Esophagus muscularis mucosa (tissue), 4 donors: ENCODE measurements at regions of chr5 and their contacts with region 1.

Region 1: GRCh38 chr5:177599731-177600507 is at the start of gene B4GALT7:
- DNase-seq: no peak
- H3K4me3 ChIP-seq: peak within 1 kb of the TSS; percentile 89 to 97 (median 90)
- H3K27ac ChIP-seq: peak within 1 kb of the TSS; percentile 81 to 92 (median 89)
- H3K4me1 ChIP-seq: peaks cover 13 to 31% (median 24%) of the 10 kb centered on the region in 4 donors
- H3K27me3 ChIP-seq: no peaks in the 10 kb centered on the region
- CTCF ChIP-seq: peak in 2 of 3 experiments; percentile 5 to 23
- EP300 ChIP-seq: no peak
- POLR2A ChIP-seq: peak; percentile 35
- total RNA-seq, gene B4GALT7: 14.3 to 17.9 (median 16.9) TPM

Region 2: DNA sequence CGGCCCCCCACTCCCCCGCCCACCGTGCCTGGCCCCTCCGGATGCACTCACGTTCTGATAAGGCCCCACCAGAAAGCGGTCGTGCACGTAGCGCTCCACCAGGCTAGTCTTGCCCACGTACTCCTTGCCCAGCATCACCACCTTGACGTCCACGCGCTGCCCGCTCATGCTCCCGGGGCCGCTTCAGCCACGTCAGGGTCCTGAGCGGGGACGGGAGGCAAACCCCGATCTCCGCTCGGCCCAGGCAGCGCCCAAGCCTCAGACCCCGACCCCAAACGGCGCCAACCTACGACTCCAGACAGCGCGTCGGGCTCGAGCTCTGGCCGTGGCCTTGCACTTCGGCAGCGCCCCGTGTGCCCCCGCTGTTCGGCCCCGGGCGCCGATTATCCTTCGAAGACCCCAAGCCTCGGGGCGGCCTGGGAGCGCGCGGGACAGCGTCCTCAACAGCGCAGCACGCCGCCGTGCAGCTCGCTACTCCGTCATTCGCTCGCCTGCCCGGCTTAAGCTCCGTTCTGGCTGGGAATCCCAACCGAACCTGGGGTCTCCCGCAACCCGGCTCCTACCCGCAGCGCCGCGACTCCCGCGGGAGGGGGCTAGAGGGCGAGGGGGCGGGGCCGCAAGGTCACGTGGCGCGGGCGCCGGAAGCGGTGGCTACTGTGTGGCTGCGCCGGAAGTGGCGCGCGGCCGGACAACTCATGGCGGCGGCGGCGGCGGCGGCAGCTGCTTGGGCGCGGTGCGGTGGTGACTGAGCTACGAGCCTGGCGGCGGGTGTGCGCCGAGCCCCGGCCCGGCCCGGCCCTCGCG is 296.6 kb before region 1 on chr5 and contains the starts of genes PRELID1 and RAB24:
- intact Hi-C with region 1: no loop called
- DNase-seq: peak; percentile 97
- H3K4me3 ChIP-seq: peak within 1 kb of the TSS; percentile 76 to 99 (median 90)
- H3K27ac ChIP-seq: peak within 1 kb of the TSS; percentile 78 to 90 (median 84)
- H3K4me1 ChIP-seq: peaks cover 48 to 67% (median 59%) of the 10 kb centered on the region in 4 donors
- H3K27me3 ChIP-seq: no peaks in the 10 kb centered on the region
- CTCF ChIP-seq: peak; percentile 23 to 41 (median 30)
- EP300 ChIP-seq: no peak
- POLR2A ChIP-seq: peak; percentile 58
- total RNA-seq, gene PRELID1: 80.6 to 93.6 (median 88.2) TPM
- total RNA-seq, gene RAB24: 20.0 to 35.4 (median 31.1) TPM

Region 3: GRCh38 chr5:178153573-178154343 is 553.8 kb after region 1 on chr5 and contains the start of gene NHP2:
- intact Hi-C with region 1: loop called (anchors 10 kb)
- DNase-seq: peak; percentile 100
- H3K4me3 ChIP-seq: peak within 1 kb of the TSS; percentile 59 to 75 (median 66)
- H3K27ac ChIP-seq: peak within 1 kb of the TSS; percentile 72 to 86 (median 79)
- H3K4me1 ChIP-seq: peaks cover 16 to 35% (median 30%) of the 10 kb centered on the region in 4 donors
- H3K27me3 ChIP-seq: no peaks in the 10 kb centered on the region
- CTCF ChIP-seq: peak in 1 of 3 experiments; percentile 13
- EP300 ChIP-seq: no peak
- POLR2A ChIP-seq: no peak
- total RNA-seq, gene NHP2: 109 to 215 (median 162) TPM